Activated CD4-positive, alpha-beta memory T cell treated with anti-CD3 and anti-CD28 coated beads for 36 hours (primary cell): ENCODE measurements at regions of chr2 and their contacts with region 1.

Region 1: DNA sequence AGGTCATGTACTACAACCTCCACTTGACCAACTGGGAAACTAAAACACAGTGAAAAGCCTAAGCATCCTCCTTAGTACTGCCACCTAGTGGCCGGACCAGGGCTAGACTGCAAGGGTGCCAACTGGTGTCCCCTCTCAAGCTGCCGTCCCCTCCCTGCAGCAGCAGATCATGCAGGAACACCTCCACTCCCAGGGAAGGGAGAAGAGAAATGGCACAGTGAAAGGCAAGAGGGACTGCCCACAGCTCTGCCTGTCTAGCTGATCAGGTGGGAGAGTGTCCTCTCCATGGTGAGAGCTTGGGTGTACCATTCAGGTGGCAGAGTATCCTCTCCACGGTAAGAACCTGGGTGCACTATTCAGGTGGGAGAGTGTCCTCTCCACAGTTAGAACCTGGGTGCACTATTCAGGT is 78.1 kb downstream of the AAK1 start:
- DNase-seq: peak; percentile 81
- H3K4me3 Mint-ChIP-seq: no peak overlapping the region
- H3K27ac Mint-ChIP-seq: no peak overlapping the region
- H3K4me1 Mint-ChIP-seq: peaks cover 88% of the 10 kb centered on the region
- H3K27me3 Mint-ChIP-seq: no peaks in the 10 kb centered on the region

Region 2: DNA sequence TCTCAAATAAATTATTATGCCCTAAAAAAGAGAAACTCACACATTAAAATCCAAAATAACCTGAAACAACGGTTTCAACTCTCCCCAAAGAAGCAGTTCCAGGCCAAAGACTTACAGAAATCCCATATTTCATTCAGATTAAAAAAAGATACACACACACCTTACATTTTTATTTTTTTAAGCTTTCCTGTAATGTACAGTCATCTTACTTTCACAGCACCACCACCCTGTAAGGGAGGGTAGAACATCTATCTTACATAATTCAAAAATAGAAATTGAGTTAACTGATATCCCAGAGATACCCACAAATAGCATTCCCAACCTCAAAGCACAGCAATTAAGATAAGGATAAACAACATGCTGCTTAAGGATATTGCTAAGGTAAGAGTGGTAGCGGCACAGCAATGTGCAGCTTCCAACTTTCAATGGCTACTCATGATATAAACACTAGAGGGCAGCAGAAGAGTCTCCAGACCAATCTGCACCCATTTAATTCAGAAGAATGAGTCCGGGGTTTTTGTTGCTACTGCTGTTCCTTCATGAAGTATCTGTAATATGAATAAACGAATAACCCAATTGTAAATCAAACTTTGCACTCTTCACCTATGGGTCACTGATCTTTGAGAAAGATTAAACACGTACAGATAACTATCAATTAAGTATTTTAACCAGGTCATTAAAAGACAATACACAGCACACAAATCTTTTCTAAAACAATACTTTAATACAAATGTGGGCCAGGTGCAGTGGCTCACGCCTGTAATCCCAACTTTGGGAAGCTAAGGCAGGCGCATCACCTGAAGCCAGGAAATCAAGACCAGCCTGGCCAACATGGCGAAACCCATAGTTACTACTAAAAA is 189.7 kb before region 1 on chr2:
- CTCF ChIA-PET with region 1: interaction called, 16 read pairs
- POLR2A ChIA-PET with region 1: no interaction called
- intact Hi-C with region 1: loop called (anchors 5 kb)
- DNase-seq: no peak
- H3K4me3 Mint-ChIP-seq: no peak overlapping the region
- H3K27ac Mint-ChIP-seq: no peak overlapping the region
- H3K4me1 Mint-ChIP-seq: peaks cover 16% of the 10 kb centered on the region
- H3K27me3 Mint-ChIP-seq: no peaks in the 10 kb centered on the region

Region 3: DNA sequence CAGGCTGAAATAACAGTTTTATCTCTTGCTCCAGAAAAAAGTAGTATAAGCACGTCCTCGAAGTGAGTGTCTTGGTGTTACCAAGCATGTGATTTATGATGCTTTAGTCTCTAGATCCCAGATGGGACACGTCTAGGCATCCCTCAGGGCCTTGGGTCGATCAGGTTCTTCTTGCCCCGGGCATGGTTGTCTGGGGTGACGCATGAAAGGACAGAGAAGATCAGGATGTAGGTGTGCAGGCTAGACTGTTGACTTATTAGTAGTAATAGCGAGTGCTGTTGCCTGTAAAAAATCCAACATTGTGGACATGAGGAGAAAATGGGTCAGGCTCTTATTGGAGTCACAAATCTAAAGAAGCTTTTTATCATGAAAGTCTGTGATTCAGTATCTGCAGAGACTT is 34.2 kb before region 1 on chr2:
- CTCF ChIA-PET with region 1: interaction called, 12 read pairs
- POLR2A ChIA-PET with region 1: no interaction called
- intact Hi-C with region 1: no loop called
- DNase-seq: no peak
- H3K4me3 Mint-ChIP-seq: no peak overlapping the region
- H3K27ac Mint-ChIP-seq: no peak overlapping the region
- H3K4me1 Mint-ChIP-seq: peaks cover 13% of the 10 kb centered on the region
- H3K27me3 Mint-ChIP-seq: no peaks in the 10 kb centered on the region

Region 4: GRCh38 chr2:69589973-69590652 is 24.7 kb after region 1 on chr2:
- CTCF ChIA-PET with region 1: interaction called, 175 read pairs
- POLR2A ChIA-PET with region 1: no interaction called
- intact Hi-C with region 1: loop called (anchors 2 kb)
- DNase-seq: no peak
- H3K4me3 Mint-ChIP-seq: no peak overlapping the region
- H3K27ac Mint-ChIP-seq: peak overlapping the region; percentile 18
- H3K4me1 Mint-ChIP-seq: peaks cover 76% of the 10 kb centered on the region
- H3K27me3 Mint-ChIP-seq: no peaks in the 10 kb centered on the region

Region 5: GRCh38 chr2:69625078-69625795 is 59.8 kb after region 1 on chr2:
- CTCF ChIA-PET with region 1: interaction called, 39 read pairs
- POLR2A ChIA-PET with region 1: no interaction called
- intact Hi-C with region 1: no loop called
- DNase-seq: no peak
- H3K4me3 Mint-ChIP-seq: no peak overlapping the region
- H3K27ac Mint-ChIP-seq: no peak overlapping the region
- H3K4me1 Mint-ChIP-seq: peaks cover 15% of the 10 kb centered on the region
- H3K27me3 Mint-ChIP-seq: no peaks in the 10 kb centered on the region

Region 6: GRCh38 chr2:69660637-69661036 is 95.2 kb after region 1 on chr2:
- CTCF ChIA-PET with region 1: interaction called, 14 read pairs
- POLR2A ChIA-PET with region 1: interaction called, 3 read pairs
- intact Hi-C with region 1: no loop called
- DNase-seq: no peak
- H3K4me3 Mint-ChIP-seq: no peak overlapping the region
- H3K27ac Mint-ChIP-seq: no peak overlapping the region
- H3K4me1 Mint-ChIP-seq: peaks cover 10% of the 10 kb centered on the region
- H3K27me3 Mint-ChIP-seq: no peaks in the 10 kb centered on the region

Region 7: GRCh38 chr2:69717861-69718273 is 152.4 kb after region 1 on chr2:
- CTCF ChIA-PET with region 1: interaction called, 52 read pairs
- POLR2A ChIA-PET with region 1: no interaction called
- intact Hi-C with region 1: no loop called
- DNase-seq: no peak
- H3K4me3 Mint-ChIP-seq: no peak overlapping the region
- H3K27ac Mint-ChIP-seq: no peak overlapping the region
- H3K4me1 Mint-ChIP-seq: peaks cover 14% of the 10 kb centered on the region
- H3K27me3 Mint-ChIP-seq: no peaks in the 10 kb centered on the region